GM13976 (cell line): ENCODE measurements at regions of chr22 and their contacts with region 1.

Region 1: GRCh38 chr22:50326959-50327710 is at the start of gene DENND6B:
- DNase-seq: peak; percentile 94
- CTCF ChIP-seq: peak; percentile 85

Region 2: GRCh38 chr22:50244420-50245213 is 82.5 kb before region 1 on chr22 and contains the start of gene TUBGCP6:
- in situ Hi-C with region 1: no loop called
- DNase-seq: peak; percentile 95
- CTCF ChIP-seq: no peak

Region 3: DNA sequence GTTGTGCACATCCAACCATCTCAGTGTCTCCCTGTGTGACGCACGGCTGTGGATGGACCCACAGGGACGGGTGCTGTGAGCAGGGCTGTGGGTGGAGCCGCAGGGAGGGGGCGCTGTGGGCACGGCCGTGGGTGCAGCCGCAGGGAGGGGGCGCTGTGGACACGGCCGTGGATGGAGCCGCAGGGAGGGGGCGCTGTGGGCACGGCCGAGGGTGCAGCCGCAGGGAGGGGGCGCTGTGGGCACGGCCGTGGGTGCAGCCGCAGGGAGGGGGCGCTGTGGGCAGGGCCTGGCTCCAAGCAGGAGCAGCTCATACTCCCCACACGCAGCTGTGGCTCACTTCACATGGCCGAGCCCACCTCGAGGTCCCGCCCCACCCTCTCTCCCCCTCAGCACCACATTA is 51.0 kb before region 1 on chr22:
- in situ Hi-C with region 1: loop called (anchors 10 kb)
- DNase-seq: peak; percentile 78
- CTCF ChIP-seq: peak; percentile 80